ENCODE measurements at regions of chr15 and their contacts with region 1.

Region 1: GRCh38 chr15:52780172-52780980 is 9.8 kb downstream of the ONECUT1 start:
- DNase-seq: no peak

Region 2: GRCh38 chr15:53197426-53197839 is 417.1 kb after region 1 on chr15:
- intact Hi-C with region 1: loop called (anchors 10 kb)
- DNase-seq: no peak

Region 3: DNA sequence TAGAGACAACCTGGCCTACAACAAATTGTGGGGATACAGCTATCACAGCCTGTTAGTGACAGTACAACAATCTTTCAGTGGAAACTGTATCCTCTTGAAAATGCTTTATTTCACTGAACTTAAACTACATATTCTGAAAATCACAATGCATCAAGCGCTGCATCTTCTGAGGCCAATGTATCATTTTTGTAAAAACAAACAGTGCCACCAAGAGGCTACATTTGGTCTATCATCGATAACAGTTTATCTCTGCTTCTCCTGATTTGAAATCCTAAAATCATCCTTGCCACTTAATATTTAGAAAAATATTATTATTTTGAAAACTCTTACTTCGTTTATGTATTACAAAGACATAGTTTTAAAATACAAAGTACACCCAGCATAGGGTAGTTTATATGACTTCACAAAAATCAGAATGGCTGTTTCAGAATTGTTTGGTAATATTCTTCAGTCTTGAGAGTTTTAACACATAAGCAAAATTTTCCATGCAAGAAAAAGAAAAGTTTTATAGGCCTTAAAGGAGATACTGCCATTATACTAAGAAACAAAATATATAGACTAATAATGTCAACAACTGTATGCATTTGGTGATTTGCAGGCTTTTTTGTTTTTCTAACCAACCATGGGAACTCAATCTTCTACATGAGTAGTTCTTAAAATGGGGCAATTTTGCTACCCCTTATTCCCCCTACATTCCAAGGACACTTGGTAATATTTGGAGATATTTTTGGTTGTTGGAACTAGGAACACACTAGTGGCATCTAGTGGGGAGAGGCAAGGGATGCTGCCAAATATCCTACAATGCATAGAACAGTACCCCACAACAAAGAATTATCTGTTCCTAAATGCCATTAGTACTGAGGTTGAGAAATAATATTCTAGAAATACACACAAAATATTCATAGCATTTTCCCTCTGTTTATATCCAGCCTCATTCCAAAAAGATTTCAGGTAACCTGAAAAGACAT is 936.8 kb after region 1 on chr15:
- intact Hi-C with region 1: loop called (anchors 5 kb)
- DNase-seq: no peak

Measured in cardiac septum (tissue), 1 donor.